ENCODE measurements at regions of chr6 and their contacts with region 1.

Region 1: GRCh38 chr6:26025894-26026832 is 61.1 kb upstream of the HFE start:
- DNase-seq: peak; percentile 83 to 98 (median 94)
- ATAC-seq: peak; percentile 45 to 47
- H3K4me3 Mint-ChIP-seq: peak overlapping the region; percentile 84 to 99 (median 92)
- H3K27ac Mint-ChIP-seq: peak overlapping the region; percentile 96 to 100 (median 99)
- H3K4me1 Mint-ChIP-seq: peaks cover 19 to 47% (median 38%) of the 10 kb centered on the region in 4 donors
- H3K27me3 Mint-ChIP-seq: peaks cover 0 to 2% (median 0%) of the 10 kb centered on the region in 5 donors

Region 2: DNA sequence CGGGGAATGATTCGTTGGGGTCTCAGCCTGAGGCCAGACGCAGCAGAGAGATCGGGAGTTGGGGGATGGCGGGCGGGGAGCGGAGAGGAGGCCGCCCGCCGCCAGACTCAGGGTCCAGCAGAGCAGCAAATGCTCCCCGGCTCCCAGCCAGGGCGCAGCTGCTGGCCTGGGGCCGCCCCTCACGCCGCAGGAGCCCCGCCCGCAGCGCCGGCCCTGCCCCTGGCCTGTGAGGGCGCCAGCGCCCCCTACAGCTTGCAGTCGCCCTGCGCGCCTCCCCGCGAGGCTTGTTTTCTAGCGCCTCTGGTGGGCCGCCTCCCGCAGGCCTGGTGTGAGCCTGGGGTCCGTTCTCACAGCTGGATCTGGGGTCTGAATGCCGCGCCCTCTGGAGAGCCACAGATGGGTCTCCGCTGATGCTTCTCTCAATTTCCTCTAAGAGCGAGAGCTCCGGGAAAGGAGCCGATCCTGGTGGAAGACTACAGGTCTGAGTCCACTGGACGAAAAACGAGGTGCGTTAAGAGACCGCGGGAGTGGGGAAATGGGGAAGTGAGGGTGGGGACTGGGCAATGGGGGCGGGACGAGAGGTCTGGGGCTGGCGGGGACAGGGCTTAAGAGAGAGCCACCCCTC is 33.6 kb before region 1 on chr6:
- POLR2A ChIA-PET with region 1: interaction called, 62 read pairs
- DNase-seq: peak; percentile 82 to 95 (median 94)
- ATAC-seq: peak; percentile 91 to 92
- H3K4me3 Mint-ChIP-seq: peak overlapping the region; percentile 93 to 98 (median 96)
- H3K27ac Mint-ChIP-seq: peak overlapping the region; percentile 91 to 98 (median 96)
- H3K4me1 Mint-ChIP-seq: peaks cover 8 to 39% (median 22%) of the 10 kb centered on the region in 4 donors
- H3K27me3 Mint-ChIP-seq: no peaks in the 10 kb centered on the region

Region 3: GRCh38 chr6:26054857-26055669 is 28.9 kb after region 1 on chr6:
- POLR2A ChIA-PET with region 1: interaction called, 748 read pairs
- DNase-seq: peak; percentile 63 to 95 (median 87)
- ATAC-seq: peak; percentile 65 to 70
- H3K4me3 Mint-ChIP-seq: peak overlapping the region; percentile 93 to 99 (median 96)
- H3K27ac Mint-ChIP-seq: peak overlapping the region; percentile 93 to 99 (median 99)
- H3K4me1 Mint-ChIP-seq: peaks cover 9 to 34% (median 21%) of the 10 kb centered on the region in 4 donors
- H3K27me3 Mint-ChIP-seq: no peaks in the 10 kb centered on the region

Region 4: DNA sequence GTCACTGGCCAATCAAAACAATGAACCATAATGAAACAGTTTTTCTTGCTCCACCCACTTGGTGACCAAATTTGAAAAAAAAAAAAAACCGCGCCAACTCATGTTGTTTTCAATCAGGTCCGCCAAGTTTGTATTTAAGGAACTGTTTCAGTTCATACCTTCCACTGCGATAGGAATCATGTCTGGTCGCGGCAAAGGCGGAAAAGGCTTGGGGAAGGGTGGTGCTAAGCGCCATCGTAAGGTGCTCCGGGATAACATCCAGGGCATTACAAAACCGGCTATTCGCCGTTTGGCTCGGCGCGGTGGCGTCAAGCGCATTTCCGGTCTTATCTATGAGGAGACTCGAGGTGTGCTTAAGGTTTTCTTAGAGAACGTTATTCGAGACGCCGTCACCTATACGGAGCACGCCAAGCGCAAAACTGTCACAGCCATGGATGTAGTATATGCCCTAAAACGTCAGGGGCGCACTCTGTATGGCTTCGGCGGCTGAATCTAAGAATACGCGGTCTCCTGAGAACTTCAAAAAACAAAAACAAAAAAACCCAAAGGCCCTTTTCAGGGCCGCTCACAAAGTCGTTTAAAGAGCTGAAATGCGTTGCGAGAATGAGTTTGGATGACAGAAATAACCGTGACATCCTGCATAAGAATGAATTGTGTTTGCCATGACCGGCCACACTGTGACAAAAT is 77.8 kb after region 1 on chr6:
- POLR2A ChIA-PET with region 1: interaction called, 23 read pairs
- DNase-seq: peak; percentile 71 to 97 (median 94)
- ATAC-seq: peak; percentile 91 to 92
- H3K4me3 Mint-ChIP-seq: peak overlapping the region; percentile 87 to 93 (median 89)
- H3K27ac Mint-ChIP-seq: peak overlapping the region; percentile 96 to 100 (median 98)
- H3K4me1 Mint-ChIP-seq: peaks cover 10 to 20% (median 14%) of the 10 kb centered on the region in 4 donors
- H3K27me3 Mint-ChIP-seq: peaks cover 0 to 4% (median 0%) of the 10 kb centered on the region in 5 donors

Region 5: GRCh38 chr6:26234421-26235296 is 208.5 kb after region 1 on chr6:
- POLR2A ChIA-PET with region 1: interaction called, 24 read pairs
- DNase-seq: peak; percentile 41 to 91 (median 86)
- ATAC-seq: peak; percentile 69
- H3K4me3 Mint-ChIP-seq: peak overlapping the region; percentile 91 to 99 (median 95)
- H3K27ac Mint-ChIP-seq: peak overlapping the region; percentile 95 to 100 (median 97)
- H3K4me1 Mint-ChIP-seq: peaks cover 12 to 37% (median 32%) of the 10 kb centered on the region in 4 donors
- H3K27me3 Mint-ChIP-seq: no peaks in the 10 kb centered on the region

Region 6: DNA sequence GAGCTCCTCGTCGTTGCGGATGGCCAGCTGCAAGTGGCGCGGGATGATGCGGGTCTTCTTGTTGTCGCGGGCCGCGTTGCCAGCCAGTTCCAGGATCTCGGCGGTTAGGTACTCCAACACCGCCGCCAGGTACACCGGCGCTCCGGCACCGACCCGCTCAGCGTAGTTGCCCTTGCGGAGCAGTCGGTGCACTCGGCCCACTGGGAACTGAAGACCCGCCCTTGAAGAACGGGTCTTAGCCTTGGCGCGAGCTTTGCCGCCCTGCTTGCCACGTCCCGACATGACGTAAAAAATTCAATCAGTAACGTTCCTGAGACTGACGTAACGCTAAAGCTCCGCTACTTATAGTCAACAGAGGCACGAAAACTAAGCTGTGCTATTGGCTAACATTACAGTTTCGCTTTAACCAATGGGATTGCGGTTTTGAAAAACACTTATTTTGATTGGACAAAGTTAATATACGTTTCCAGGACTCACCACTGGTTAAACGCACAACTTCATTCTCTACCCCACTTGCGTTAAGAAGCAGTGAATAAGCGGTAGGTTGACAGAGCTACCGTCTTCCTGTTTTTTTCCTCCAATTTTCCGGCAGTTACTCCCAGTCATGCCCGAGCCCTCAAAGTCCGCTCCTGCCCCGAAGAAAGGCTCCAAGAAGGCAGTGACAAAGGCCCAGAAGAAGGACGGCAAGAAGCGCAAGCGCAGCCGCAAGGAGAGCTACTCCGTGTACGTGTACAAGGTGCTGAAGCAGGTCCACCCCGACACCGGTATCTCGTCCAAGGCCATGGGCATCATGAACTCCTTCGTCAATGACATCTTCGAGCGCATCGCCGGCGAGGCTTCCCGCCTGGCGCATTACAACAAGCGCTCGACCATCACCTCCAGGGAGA is 1812.1 kb after region 1 on chr6:
- POLR2A ChIA-PET with region 1: interaction called, 25 read pairs
- DNase-seq: peak; percentile 63 to 95 (median 88)
- ATAC-seq: peak; percentile 78 to 81
- H3K4me3 Mint-ChIP-seq: no peak overlapping the region
- H3K27ac Mint-ChIP-seq: no peak overlapping the region
- H3K4me1 Mint-ChIP-seq: peaks cover 8 to 36% (median 18%) of the 10 kb centered on the region in 4 donors
- H3K27me3 Mint-ChIP-seq: peaks cover 0 to 8% (median 0%) of the 10 kb centered on the region in 5 donors